ENCODE measurements at regions of chr5 and their contacts with region 1.

Region 1: GRCh38 chr5:38382898-38383297 is 124.5 kb downstream of the EGFLAM start:
- H3K4me3 ChIP-seq: no peak overlapping the region
- H3K27ac ChIP-seq: no peak overlapping the region
- H3K4me1 ChIP-seq: peaks cover 11% of the 10 kb centered on the region
- CTCF ChIP-seq: peak; percentile 83

Region 2: GRCh38 chr5:38208782-38209378 is 174.0 kb before region 1 on chr5:
- CTCF ChIA-PET with region 1: interaction called, 13 read pairs
- POLR2A ChIA-PET with region 1: no interaction called
- H3K4me3 ChIP-seq: no peak overlapping the region
- H3K27ac ChIP-seq: no peak overlapping the region
- H3K4me1 ChIP-seq: no peaks in the 10 kb centered on the region
- CTCF ChIP-seq: peak; percentile 67

Region 3: DNA sequence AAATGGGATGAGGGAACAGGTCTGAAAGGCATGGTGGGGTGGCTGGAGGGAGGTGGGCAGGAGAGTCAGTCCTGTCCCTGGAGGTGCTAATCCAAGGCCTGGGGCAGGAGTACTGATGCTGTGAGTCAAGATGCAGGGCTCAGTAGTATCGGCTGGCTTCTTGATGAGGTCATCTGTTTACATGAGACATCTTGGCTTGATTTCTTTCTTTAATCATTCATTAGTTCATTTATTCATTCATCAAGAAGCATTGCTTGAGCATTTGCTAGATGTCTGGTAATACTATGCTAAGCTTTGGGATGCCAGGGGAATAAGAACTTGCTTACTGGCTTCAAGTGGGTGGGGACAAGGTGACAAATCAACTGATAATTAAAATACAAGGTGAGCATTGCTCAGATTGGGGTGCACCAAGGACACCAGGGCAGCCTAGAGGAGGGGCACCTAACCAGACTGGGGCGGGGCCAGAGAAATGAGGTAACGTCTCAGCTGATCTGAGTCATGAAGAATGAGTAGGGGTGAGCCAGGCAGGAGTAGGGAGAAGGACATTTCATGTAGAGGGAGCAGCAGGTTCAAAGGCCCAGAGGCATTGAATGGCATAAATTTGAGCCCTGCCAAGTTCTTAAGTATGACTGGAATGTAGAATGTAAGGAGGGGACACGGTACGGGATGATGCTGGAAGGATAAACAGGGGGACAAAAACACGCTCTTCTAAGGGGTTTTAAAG is 35.7 kb before region 1 on chr5:
- CTCF ChIA-PET with region 1: interaction called, 10 read pairs
- POLR2A ChIA-PET with region 1: no interaction called
- H3K4me3 ChIP-seq: no peak overlapping the region
- H3K27ac ChIP-seq: no peak overlapping the region
- H3K4me1 ChIP-seq: no peaks in the 10 kb centered on the region
- CTCF ChIP-seq: no peak

Region 4: DNA sequence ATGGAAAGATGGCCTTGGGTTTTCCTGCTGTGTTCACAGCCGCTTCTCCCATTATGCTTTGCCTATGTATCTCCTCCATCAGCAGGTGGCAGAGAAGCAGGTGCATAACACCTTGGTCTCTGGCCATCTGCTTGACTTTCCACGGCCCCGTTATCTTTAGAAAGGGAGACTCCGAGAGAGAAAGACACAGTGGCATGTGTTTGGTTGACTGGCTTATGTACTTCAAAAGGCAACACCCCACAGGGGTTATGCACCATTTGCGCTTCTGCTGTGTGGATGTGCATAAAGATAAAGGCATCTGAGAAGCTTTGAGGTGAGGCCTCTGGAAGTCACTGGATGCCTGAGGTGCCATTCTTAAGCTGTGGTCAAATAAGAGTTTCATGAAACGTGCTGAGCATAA is 13.9 kb after region 1 on chr5:
- CTCF ChIA-PET with region 1: interaction called, 31 read pairs
- POLR2A ChIA-PET with region 1: no interaction called
- H3K4me3 ChIP-seq: no peak overlapping the region
- H3K27ac ChIP-seq: no peak overlapping the region
- H3K4me1 ChIP-seq: no peaks in the 10 kb centered on the region
- CTCF ChIP-seq: no peak

Region 5: GRCh38 chr5:38414348-38414747 is 31.4 kb after region 1 on chr5:
- CTCF ChIA-PET with region 1: interaction called, 57 read pairs
- POLR2A ChIA-PET with region 1: no interaction called
- H3K4me3 ChIP-seq: no peak overlapping the region
- H3K27ac ChIP-seq: no peak overlapping the region
- H3K4me1 ChIP-seq: peaks cover 14% of the 10 kb centered on the region
- CTCF ChIP-seq: no peak

Region 6: GRCh38 chr5:39319395-39319794 is 936.5 kb after region 1 on chr5:
- CTCF ChIA-PET with region 1: interaction called, 12 read pairs
- POLR2A ChIA-PET with region 1: no interaction called
- H3K4me3 ChIP-seq: no peak overlapping the region
- H3K27ac ChIP-seq: no peak overlapping the region
- H3K4me1 ChIP-seq: no peaks in the 10 kb centered on the region
- CTCF ChIP-seq: no peak